CD4-positive, alpha-beta T cell (primary cell): ENCODE measurements at regions of chr5 and their contacts with region 1.

Region 1: GRCh38 chr5:178551059-178551458 is 39.1 kb downstream of the COL23A1 start:
- DNase-seq: peak in 1 of 14 experiments; percentile 29
- ATAC-seq: no peak
- H3K4me3 ChIP-seq: no peak overlapping the region
- H3K4me3 Mint-ChIP-seq: no peak overlapping the region
- H3K27ac ChIP-seq: no peak overlapping the region
- H3K27ac Mint-ChIP-seq: no peak overlapping the region
- H3K4me1 ChIP-seq: no peaks in the 10 kb centered on the region
- H3K4me1 Mint-ChIP-seq: no peaks in the 10 kb centered on the region
- H3K27me3 ChIP-seq: no peaks in the 10 kb centered on the region
- H3K27me3 Mint-ChIP-seq: peaks cover 24% of the 10 kb centered on the region
- CTCF ChIP-seq: peak; percentile 59

Region 2: DNA sequence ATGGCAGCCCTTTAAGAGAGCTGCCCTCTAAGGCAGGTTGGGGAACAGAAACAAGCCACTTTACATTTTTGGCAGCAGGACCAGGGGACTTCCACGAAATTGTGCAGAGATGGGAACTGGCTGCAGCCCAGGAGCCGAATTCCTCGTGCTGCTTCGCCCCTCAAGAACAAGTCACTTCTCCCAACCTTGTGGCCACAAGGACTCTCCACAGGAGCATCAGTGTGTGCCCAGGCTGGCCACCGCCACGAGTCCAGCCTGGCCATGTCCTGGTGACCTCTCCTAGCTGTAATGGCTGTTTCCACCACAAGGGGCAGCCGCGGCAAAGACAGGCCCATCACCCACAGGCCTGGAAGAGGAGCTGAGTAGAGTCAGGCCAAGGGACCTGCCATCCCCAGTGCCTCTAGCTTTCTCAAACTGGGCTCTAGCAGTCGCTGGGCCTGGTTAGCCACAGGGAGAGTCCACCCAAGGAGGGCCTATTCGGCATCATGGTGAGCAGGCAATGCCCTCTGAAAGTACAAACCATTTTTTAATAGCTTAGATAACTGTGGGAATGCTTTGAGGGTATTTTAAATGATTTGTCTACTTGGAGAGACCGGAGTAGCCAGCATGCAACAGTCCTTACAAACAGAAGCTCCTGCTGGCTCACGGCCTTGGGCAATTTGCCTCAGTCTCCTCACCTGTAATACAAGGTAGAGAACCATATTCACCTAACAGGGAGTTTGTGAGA is 89.9 kb before region 1 on chr5:
- CTCF ChIA-PET with region 1: no interaction called
- POLR2A ChIA-PET with region 1: no interaction called
- intact Hi-C with region 1: loop called in 1 of 2 experiments (anchors 5 kb)
- DNase-seq: peak in 12 of 14 experiments; percentile 9 to 62 (median 22)
- ATAC-seq: no peak
- H3K4me3 ChIP-seq: no peak overlapping the region
- H3K4me3 Mint-ChIP-seq: no peak overlapping the region
- H3K27ac ChIP-seq: no peak overlapping the region
- H3K27ac Mint-ChIP-seq: no peak overlapping the region
- H3K4me1 ChIP-seq: no peaks in the 10 kb centered on the region
- H3K4me1 Mint-ChIP-seq: no peaks in the 10 kb centered on the region
- H3K27me3 ChIP-seq: no peaks in the 10 kb centered on the region
- H3K27me3 Mint-ChIP-seq: no peaks in the 10 kb centered on the region
- CTCF ChIP-seq: peak; percentile 54